ENCODE measurements at regions of chr1 and their contacts with region 1.

Region 1: GRCh38 chr1:32892368-32893197 is 6.3 kb downstream of the HPCA start:
- DNase-seq: peak; percentile 59
- H3K4me3 Mint-ChIP-seq: no peak overlapping the region
- H3K27ac Mint-ChIP-seq: no peak overlapping the region
- H3K4me1 Mint-ChIP-seq: peaks cover 9% of the 10 kb centered on the region
- H3K27me3 Mint-ChIP-seq: peaks cover 56% of the 10 kb centered on the region

Region 2: DNA sequence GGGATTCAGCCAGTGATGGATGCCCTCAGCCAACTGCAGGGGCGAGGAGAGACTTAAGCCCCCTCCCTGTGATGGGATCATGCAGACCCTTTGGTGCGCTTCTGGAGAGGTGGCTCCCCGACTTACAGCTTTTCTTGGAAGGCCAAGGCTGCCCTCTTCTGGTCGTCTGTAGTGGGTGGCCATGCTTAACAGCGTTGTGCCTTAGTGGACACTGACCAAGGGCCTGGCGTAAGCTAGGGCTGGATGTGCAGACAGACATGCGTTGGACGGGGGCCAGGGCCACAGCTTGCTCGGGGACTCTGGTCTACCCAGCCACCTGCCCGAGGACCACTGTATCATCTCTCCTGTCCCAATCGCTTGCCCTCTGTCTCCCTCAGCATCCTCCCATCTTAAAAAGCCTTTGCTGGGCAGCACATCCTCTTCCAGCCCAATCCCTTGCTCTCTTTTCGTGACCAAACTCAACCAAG is 193.8 kb after region 1 on chr1:
- CTCF ChIA-PET with region 1: interaction called, 16 read pairs
- POLR2A ChIA-PET with region 1: no interaction called
- intact Hi-C with region 1: no loop called
- DNase-seq: peak; percentile 64
- H3K4me3 Mint-ChIP-seq: no peak overlapping the region
- H3K27ac Mint-ChIP-seq: no peak overlapping the region
- H3K4me1 Mint-ChIP-seq: peaks cover 15% of the 10 kb centered on the region
- H3K27me3 Mint-ChIP-seq: no peaks in the 10 kb centered on the region

Measured in activated CD4-positive, alpha-beta memory T cell treated with anti-CD3 and anti-CD28 coated beads for 36 hours (primary cell).